BJ (cell line): ENCODE measurements at regions of chr10 and their contacts with region 1.

Region 1: DNA sequence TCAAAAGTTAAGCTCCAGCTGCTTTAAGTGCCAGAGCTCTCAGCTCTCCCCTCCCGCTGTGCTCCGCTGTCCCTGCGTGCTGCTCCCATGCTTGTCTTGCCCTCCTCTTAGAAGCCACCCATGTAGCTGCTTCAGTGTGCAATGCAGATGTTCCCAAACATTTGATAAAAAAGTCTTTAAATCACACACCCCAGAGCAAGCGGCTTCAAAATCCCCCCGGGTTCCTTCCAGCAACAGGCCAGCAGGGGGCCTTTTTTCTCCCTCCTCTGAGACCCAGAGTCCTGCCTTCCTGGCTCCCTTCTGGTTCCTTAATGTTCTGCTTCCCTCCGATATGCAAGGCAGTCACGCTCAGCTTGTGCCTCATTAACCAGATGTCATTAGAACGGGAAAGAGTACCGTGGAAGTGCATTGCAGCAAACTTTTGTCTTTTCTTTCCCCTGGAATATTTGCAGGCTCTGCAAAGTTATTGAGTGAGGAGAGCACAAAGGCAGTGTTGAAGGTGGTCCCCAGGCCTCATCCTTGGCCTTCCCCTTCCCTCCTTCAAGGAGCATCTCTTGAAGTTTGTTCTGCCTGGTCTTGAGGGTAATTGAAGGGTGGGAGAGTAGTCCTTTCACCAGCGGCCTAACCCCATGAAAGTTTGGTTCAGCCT is 25.5 kb downstream of the LDB3 start:
- DNase-seq: peak; percentile 29
- H3K4me3 ChIP-seq: no peak overlapping the region
- H3K27me3 ChIP-seq: peaks cover 1% of the 10 kb centered on the region; the same call in 1 of the 2 replicates
- CTCF ChIP-seq: peak; percentile 83

Region 2: DNA sequence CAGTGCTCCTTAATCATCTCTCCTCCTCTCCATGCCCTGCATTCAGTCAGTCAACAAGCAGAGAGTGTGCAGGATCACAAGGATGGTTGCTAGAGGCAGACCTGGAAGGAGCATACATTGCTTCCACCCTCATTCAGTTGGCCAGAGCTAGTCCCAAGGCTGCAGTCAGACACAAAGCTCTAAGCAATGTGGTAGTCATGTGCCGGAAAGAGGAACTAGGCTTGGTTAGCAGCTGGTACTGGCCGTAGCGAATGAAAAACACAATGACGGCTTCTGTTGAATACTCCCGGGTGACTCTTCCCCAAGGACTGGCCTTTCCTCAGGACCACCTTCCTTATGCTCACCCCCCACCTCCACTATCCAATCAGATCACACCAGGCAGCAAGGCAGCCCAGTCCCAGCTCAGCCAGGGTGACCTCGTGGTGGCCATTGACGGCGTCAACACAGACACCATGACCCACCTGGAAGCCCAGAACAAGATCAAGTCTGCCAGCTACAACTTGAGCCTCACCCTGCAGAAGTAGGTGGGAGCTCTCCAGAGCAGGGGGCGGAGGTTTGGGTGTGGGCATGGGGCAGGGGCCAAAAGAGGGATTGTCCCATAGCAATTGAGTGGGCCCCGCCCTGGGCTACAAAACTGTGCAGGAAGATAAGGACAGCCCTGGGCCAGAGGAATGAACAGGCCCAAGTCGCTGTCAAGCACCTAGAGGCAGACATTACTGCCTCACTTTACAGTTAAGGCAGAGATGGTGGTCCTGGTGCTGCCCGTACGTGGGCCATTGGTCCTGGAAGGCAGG is 14.6 kb before region 1 on chr10:
- CTCF ChIA-PET with region 1: interaction called, 15 read pairs
- POLR2A ChIA-PET with region 1: no interaction called
- DNase-seq: no peak
- H3K4me3 ChIP-seq: no peak overlapping the region
- H3K27me3 ChIP-seq: no peaks in the 10 kb centered on the region
- CTCF ChIP-seq: no peak

Region 3: DNA sequence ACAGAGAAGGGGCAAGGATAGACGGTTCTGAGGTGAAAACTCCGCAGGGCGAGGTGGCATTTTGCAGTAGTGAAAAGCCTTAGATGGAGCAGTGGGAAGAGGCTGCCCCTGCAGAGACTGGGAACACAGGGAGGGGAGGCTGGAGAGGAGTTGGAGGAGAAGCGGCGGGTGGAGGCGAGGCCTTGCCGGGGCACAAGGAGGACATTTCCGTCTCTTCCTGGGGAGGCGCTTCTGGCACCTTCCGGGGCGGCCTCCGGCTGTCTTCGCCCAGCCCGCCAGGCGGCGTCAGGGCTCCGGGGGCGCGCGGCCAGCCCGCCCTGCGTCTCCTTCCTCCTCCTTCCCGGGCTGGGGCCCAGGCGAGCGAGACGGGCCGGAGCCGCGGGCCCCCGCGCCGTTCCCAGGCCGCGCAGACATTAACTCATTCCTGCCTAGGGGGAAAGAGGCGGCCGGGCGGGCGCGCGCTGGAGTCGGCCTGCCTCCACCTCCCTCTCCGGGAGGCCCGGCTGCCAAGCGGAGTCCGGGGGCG is 17.2 kb after region 1 on chr10:
- CTCF ChIA-PET with region 1: interaction called, 20 read pairs
- POLR2A ChIA-PET with region 1: no interaction called
- DNase-seq: peak; percentile 42
- H3K4me3 ChIP-seq: peak overlapping the region; percentile 57
- H3K27me3 ChIP-seq: no peaks in the 10 kb centered on the region
- CTCF ChIP-seq: peak; percentile 66